Endothelial cell of umbilical vein (primary cell): ENCODE measurements at regions of chr10 and their contacts with region 1.

Region 1: DNA sequence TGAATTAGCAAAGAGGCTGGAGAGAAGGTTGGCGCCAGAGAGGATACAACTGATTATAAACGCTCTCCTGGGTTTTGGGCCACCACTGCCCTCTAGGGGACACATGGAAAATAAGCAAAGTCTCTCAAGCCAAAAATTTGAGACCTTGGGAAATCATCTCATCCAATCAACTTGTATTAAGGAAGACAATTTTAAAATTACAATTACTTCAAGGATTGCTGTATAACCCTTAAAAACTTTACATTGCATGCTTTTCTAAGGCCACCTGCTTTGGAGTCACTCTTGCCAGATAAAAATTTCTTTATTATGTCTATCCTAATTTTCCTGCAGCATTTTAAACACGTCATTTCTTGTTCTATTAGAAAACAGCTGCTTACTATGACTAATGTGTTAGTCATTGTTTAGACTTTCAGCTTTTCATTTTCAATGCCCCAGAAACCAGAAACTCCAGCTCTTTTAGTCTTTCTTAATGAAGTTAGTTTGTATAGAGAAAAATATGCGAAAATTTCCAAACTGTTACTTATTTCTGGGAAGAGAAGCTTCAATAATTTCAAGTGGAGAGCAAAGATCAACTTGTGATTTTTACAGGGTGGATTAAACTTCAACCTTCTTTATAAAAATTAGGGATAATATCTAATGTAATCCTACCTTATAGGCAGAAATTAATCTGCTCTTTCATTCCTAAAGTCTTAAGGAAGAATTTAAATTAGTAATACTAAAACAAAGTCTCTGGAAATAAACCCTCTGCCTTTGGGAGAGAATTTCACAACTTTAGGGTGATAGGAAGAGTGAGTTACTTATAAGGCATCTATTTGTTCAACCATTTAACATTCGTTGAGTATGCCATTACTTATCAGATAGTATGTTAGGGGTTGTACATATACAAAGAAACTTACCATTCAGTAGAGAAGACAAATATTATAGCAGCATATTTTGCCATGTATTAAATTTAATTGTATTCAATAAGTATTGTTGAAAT is 20.6 kb upstream of the RHOBTB1 start:
- DNase-seq: peak; percentile 91
- H3K4me3 ChIP-seq: peak overlapping the region in 1 of 3 experiments; percentile 34
- H3K27ac ChIP-seq: peak overlapping the region; percentile 94
- H3K4me1 ChIP-seq: peaks cover 27% of the 10 kb centered on the region
- H3K27me3 ChIP-seq: no peaks in the 10 kb centered on the region
- CTCF ChIP-seq: peak; percentile 67 to 74
- POLR2A ChIP-seq: no peak

Region 2: DNA sequence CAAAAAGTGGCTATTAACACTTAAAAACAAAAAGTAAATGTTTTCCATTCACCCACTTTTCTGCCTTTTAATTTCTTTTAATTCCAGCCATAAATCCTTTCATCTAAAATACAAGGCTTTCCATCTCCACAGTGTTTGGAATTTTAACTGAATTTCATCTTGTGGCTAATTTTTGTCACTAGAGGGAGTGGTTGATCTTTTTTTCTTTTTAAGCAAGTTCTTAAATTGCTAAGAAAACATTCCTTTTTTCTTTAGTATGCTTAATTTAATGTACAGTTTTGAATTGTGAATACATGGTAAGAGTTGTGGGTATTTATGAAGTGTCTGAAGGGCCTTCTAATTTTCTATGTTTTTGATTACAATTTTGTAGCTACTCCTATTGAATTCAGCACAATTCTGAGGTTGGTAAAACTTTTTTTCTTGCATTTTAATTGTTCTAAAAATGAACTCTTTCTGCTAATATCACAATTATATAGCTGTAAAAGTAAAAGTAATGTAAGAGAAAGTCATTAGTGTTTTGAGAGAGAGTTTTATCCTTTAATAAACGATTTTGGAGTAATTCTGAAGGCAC is 520.0 kb before region 1 on chr10:
- CTCF ChIA-PET with region 1: no interaction called
- POLR2A ChIA-PET with region 1: no interaction called
- dilution Hi-C with region 1: no loop called
- intact Hi-C with region 1: loop called (anchors 10 kb)
- DNase-seq: peak; percentile 45
- H3K4me3 ChIP-seq: no peak overlapping the region
- H3K27ac ChIP-seq: no peak overlapping the region
- H3K4me1 ChIP-seq: peaks cover 7% of the 10 kb centered on the region
- H3K27me3 ChIP-seq: no peaks in the 10 kb centered on the region
- CTCF ChIP-seq: peak; percentile 14 to 18
- POLR2A ChIP-seq: no peak

Region 3: DNA sequence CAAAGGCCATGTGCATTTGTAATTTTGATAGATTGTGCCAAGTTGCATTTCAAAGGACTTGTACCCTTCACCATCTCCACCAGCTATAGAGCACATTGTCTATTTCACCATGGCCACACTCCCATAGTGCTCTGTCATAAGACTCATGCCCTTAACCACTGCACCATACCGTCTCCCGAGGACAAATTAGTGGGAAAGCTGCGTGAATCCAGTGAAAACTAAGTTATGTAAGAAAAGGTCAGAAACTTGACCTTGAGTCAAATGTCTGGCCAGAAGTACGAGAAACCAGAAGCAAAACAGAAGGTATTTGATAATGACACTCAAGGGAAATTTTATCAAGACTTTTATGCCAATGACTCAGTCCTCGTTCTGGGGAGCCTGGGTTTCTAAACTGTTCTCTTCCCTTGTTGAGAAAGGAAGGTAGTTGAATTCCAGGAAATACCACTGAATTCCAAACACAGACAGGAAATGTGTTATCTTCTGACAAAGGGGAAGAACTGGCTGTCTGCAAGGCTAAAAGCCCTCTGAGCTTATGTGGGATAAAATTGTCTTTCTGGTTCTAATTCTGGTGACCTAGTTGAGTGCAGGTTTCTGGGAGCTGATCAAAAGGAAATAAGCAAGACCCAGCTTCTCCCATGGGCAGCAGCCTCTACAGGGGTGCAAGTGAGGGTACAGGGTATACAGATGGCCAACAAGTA is 136.6 kb before region 1 on chr10:
- CTCF ChIA-PET with region 1: interaction called, 20 read pairs
- POLR2A ChIA-PET with region 1: no interaction called
- dilution Hi-C with region 1: no loop called
- intact Hi-C with region 1: loop called (anchors 1 kb)
- DNase-seq: peak; percentile 98
- H3K4me3 ChIP-seq: peak overlapping the region in 1 of 3 experiments; percentile 39
- H3K27ac ChIP-seq: peak overlapping the region; percentile 98
- H3K4me1 ChIP-seq: peaks cover 32% of the 10 kb centered on the region
- H3K27me3 ChIP-seq: no peaks in the 10 kb centered on the region
- CTCF ChIP-seq: no peak
- POLR2A ChIP-seq: no peak

Region 4: GRCh38 chr10:60944159-60944909 is 20.2 kb before region 1 on chr10 and contains the start of gene RHOBTB1:
- CTCF ChIA-PET with region 1: interaction called, 16 read pairs
- POLR2A ChIA-PET with region 1: interaction called, 3 read pairs
- dilution Hi-C with region 1: no loop called
- intact Hi-C with region 1: loop called (anchors 1 kb)
- DNase-seq: peak; percentile 85
- H3K4me3 ChIP-seq: peak within 1 kb of the TSS; percentile 74 to 91 (median 86)
- H3K27ac ChIP-seq: peak within 1 kb of the TSS; percentile 98
- H3K4me1 ChIP-seq: peaks cover 18% of the 10 kb centered on the region
- H3K27me3 ChIP-seq: no peaks in the 10 kb centered on the region
- CTCF ChIP-seq: no peak
- POLR2A ChIP-seq: peak; percentile 71
- total RNA-seq, gene RHOBTB1: 31.0 and 31.3 TPM in 2 replicates

Region 5: DNA sequence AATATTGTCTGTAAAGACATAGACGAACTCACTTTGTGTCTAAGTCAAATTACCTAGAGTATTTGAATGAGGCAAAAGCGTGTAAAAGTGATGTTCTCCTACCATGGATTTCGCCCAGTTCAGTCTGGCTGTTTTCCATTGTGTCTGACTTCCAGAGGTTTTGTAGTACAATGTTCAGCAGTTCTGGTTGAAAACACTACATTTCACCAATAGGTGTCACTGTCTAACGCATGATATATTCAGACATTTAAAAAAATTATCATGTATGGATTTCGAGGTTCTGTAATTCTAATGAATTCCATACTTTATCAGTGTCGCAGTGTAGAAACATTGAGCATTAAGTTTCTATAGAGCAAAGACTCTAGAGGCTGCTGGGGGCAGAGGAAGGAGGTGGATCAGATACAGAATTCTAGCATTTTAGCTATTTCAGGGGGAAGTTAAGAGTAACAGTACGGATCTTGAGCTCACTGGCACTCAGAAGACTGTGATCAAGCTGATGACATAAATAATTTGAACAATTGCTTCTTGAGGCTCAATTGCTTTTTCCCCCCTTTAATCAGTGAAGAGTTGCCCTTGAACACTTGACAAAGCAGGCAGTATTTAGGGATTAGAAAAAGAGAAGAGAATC is 176.3 kb after region 1 on chr10:
- CTCF ChIA-PET with region 1: interaction called, 3 read pairs
- POLR2A ChIA-PET with region 1: no interaction called
- dilution Hi-C with region 1: no loop called
- intact Hi-C with region 1: loop called (anchors 2 kb)
- DNase-seq: peak; percentile 88
- H3K4me3 ChIP-seq: no peak overlapping the region
- H3K27ac ChIP-seq: peak overlapping the region; percentile 12
- H3K4me1 ChIP-seq: peaks cover 21% of the 10 kb centered on the region
- H3K27me3 ChIP-seq: no peaks in the 10 kb centered on the region
- CTCF ChIP-seq: peak; percentile 51 to 55
- POLR2A ChIP-seq: no peak

Region 6: GRCh38 chr10:61284222-61284890 is 319.8 kb after region 1 on chr10:
- CTCF ChIA-PET with region 1: interaction called, 5 read pairs
- POLR2A ChIA-PET with region 1: no interaction called
- dilution Hi-C with region 1: no loop called
- intact Hi-C with region 1: loop called (anchors 1 kb)
- DNase-seq: peak; percentile 83
- H3K4me3 ChIP-seq: no peak overlapping the region
- H3K27ac ChIP-seq: no peak overlapping the region
- H3K4me1 ChIP-seq: peaks cover 12% of the 10 kb centered on the region
- H3K27me3 ChIP-seq: no peaks in the 10 kb centered on the region
- CTCF ChIP-seq: peak; percentile 39 to 48
- POLR2A ChIP-seq: no peak

Region 7: DNA sequence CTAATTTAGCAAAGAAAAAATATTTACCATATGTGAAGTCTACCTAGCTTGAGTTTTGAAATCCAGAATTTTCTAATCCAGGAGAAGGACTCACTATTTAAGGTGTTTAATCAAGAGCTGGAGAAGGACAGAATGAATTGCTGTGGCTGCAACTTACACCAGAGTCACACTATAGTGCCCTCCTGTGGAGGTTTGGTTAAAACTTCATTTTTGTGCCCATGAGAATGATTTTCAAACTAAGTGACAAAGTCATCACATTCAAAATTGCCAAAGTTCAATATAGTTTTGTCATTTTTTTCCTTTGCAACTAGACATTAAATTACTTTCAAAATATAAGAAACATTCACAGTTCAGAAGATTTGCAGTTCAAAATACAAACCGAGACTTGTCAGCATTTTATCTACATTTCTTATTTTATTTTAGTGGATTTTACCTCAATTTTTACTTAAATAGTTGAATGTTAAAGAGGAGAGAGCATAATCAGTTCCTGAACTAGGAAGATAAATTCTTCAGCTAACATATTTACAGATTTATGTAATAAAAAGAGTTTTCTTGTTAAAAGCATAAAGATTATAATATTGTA is 768.9 kb after region 1 on chr10:
- CTCF ChIA-PET with region 1: interaction called, 3 read pairs
- POLR2A ChIA-PET with region 1: no interaction called
- dilution Hi-C with region 1: no loop called
- intact Hi-C with region 1: loop called (anchors 1 kb)
- DNase-seq: peak; percentile 68
- H3K4me3 ChIP-seq: no peak overlapping the region
- H3K27ac ChIP-seq: no peak overlapping the region
- H3K4me1 ChIP-seq: peaks cover 3% of the 10 kb centered on the region
- H3K27me3 ChIP-seq: no peaks in the 10 kb centered on the region
- CTCF ChIP-seq: peak; percentile 44 to 49
- POLR2A ChIP-seq: no peak